ENCODE measurements at regions of chr5 and their contacts with region 1.

Region 1: GRCh38 chr5:14270209-14270702 is 127.1 kb downstream of the TRIO start:
- DNase-seq: peak; percentile 70
- H3K4me3 Mint-ChIP-seq: no peak overlapping the region
- H3K27ac Mint-ChIP-seq: no peak overlapping the region
- H3K4me1 Mint-ChIP-seq: peaks cover 50% of the 10 kb centered on the region
- H3K27me3 Mint-ChIP-seq: no peaks in the 10 kb centered on the region
- CTCF ChIP-seq: peak; percentile 81

Region 2: DNA sequence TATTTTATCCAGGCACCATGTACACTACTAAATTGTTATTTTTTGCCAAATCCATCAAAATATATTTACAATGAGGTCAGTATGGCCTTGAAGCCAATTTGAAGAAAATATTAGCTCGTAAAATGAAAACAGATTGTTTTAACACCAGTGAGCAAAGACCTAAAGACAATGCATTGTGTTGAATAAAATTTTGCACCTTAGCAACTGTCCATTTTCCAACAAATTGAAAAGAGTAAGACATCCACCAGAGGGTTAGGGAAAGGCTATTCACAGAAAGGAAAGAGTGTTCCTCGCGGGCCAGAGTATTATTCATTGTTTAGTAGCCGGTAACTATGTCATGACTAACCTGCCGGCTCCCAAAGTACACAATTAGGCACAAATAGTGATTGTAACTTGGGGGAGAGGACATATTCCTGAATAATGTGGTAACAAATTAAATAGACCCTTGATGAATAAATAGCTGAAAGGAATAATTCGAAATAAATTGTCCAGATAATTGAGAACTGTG is 539.1 kb before region 1 on chr5:
- CTCF ChIA-PET with region 1: no interaction called
- POLR2A ChIA-PET with region 1: no interaction called
- intact Hi-C with region 1: no loop called
- DNase-seq: no peak
- H3K4me3 Mint-ChIP-seq: no peak overlapping the region
- H3K27ac Mint-ChIP-seq: no peak overlapping the region
- H3K4me1 Mint-ChIP-seq: no peaks in the 10 kb centered on the region
- H3K27me3 Mint-ChIP-seq: no peaks in the 10 kb centered on the region
- CTCF ChIP-seq: no peak

Region 3: DNA sequence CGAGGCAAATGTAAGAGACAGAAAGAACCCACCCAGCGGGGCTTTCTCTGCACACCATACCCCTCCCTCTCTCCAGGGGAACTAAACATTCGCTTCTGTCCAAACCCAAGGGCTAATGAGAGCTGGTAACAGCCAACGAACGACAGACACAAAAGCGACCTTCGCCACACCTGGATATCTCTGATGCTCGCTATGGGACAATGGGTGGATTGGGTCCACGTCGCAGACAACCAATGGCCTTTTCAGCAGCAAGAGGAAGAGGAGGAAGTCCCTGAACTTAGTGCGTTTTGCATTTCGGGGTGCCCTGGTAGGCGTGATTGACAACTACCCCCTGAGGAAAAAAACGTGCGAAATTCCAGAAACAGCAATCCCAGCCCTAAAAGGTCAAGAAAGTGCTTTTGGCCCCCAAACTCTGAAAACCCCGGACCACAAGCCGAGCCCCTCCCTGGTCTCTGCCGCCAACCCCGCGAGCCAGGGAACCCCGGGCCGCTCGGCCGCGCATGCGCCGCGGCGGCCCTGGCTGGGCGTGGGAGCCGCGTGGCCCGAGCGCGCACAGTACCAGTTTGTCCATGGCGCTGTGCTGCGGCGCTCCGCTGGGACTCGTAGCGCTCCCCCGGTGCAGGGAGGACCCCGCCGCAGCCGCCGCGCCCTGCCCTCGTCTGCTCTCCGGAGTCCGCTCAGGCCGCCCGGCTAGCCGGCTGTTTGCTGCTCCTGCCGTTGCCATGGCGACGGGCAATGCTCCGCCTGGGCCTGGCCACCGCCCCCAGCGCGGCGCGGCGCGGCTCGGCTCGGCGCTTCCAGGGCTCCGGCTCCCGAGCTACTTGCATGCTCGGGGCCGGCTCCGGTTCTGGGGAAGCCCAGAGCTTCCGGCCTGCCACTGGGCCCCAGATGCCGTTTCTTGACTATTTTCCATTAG is 258.9 kb before region 1 on chr5:
- CTCF ChIA-PET with region 1: interaction called, 5 read pairs
- POLR2A ChIA-PET with region 1: interaction called, 5 read pairs
- intact Hi-C with region 1: loop called (anchors 2 kb)
- DNase-seq: peak; percentile 81
- H3K4me3 Mint-ChIP-seq: peak overlapping the region; percentile 70
- H3K27ac Mint-ChIP-seq: no peak overlapping the region
- H3K4me1 Mint-ChIP-seq: no peaks in the 10 kb centered on the region
- H3K27me3 Mint-ChIP-seq: no peaks in the 10 kb centered on the region
- CTCF ChIP-seq: no peak

Region 4: GRCh38 chr5:14108170-14108996 is 161.9 kb before region 1 on chr5:
- CTCF ChIA-PET with region 1: interaction called, 32 read pairs
- POLR2A ChIA-PET with region 1: interaction called, 3 read pairs
- intact Hi-C with region 1: loop called (anchors 2 kb)
- DNase-seq: peak; percentile 80
- H3K4me3 Mint-ChIP-seq: no peak overlapping the region
- H3K27ac Mint-ChIP-seq: no peak overlapping the region
- H3K4me1 Mint-ChIP-seq: peaks cover 19% of the 10 kb centered on the region
- H3K27me3 Mint-ChIP-seq: no peaks in the 10 kb centered on the region
- CTCF ChIP-seq: peak; percentile 26

Region 5: GRCh38 chr5:14148890-14149671 is 121.2 kb before region 1 on chr5:
- CTCF ChIA-PET with region 1: interaction called, 20 read pairs
- POLR2A ChIA-PET with region 1: interaction called, 128 read pairs
- intact Hi-C with region 1: loop called (anchors 1 kb)
- DNase-seq: no peak
- H3K4me3 Mint-ChIP-seq: no peak overlapping the region
- H3K27ac Mint-ChIP-seq: peak overlapping the region; percentile 46
- H3K4me1 Mint-ChIP-seq: peaks cover 49% of the 10 kb centered on the region
- H3K27me3 Mint-ChIP-seq: no peaks in the 10 kb centered on the region
- CTCF ChIP-seq: no peak

Region 6: DNA sequence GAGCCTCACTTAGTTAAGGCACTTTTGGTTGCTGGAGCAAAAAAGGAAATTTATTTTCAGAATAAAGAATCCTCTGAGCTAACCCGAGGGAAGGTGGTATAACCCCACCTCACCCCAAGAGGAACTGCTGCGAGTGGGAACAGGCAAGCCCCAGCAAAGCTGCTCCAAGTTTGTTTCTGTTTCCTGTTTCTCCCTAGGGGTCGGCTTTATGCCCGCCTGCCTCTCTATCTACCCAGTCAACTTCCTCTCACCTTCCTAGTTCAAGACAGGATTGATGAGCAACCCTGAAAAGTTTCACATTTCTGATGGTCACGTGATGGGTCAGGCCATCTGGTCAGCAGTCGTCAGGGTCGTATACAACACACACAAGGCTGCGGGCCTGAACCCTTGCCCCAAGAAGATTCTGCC is 96.0 kb before region 1 on chr5:
- CTCF ChIA-PET with region 1: interaction called, 10 read pairs
- POLR2A ChIA-PET with region 1: interaction called, 4 read pairs
- intact Hi-C with region 1: no loop called
- DNase-seq: no peak
- H3K4me3 Mint-ChIP-seq: no peak overlapping the region
- H3K27ac Mint-ChIP-seq: peak overlapping the region; percentile 90
- H3K4me1 Mint-ChIP-seq: peaks cover 45% of the 10 kb centered on the region
- H3K27me3 Mint-ChIP-seq: no peaks in the 10 kb centered on the region
- CTCF ChIP-seq: no peak

Region 7: GRCh38 chr5:14258840-14259239 is 11.4 kb before region 1 on chr5:
- CTCF ChIA-PET with region 1: interaction called, 23 read pairs
- POLR2A ChIA-PET with region 1: no interaction called
- intact Hi-C with region 1: no loop called
- DNase-seq: no peak
- H3K4me3 Mint-ChIP-seq: no peak overlapping the region
- H3K27ac Mint-ChIP-seq: no peak overlapping the region
- H3K4me1 Mint-ChIP-seq: peaks cover 16% of the 10 kb centered on the region
- H3K27me3 Mint-ChIP-seq: no peaks in the 10 kb centered on the region
- CTCF ChIP-seq: no peak